ENCODE measurements at regions of chr10 and their contacts with region 1.

Region 1: DNA sequence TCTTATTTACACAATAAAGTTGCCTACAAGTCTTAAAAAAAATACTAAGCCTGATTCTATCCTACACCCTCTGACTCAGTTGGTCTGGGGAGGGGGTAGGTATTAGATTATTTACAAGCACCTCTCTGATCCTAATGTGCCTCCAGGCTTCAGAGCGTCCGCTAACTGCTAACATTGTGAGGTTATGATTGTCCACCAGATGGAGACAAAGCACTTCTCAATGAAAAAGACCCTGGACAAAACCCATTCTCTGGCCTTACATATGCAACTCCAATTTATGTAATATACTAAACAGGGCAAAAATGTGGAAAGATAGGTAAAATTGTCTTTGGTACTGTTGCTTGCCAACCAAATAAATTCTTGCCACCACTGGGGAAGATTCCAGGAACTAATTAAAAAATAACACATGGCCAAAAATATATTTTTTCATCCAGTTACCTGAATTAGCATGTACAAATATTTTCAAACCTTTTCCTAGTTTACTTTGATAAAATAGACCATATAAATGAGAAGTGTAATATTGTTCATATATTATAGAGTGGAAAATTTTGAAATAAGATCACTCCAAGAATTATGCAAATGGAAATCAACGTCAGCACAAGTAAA is 92.4 kb downstream of the KIF20B start:
- DNase-seq: peak in 24 of 42 donors; percentile 4 to 78 (median 37)

Region 2: DNA sequence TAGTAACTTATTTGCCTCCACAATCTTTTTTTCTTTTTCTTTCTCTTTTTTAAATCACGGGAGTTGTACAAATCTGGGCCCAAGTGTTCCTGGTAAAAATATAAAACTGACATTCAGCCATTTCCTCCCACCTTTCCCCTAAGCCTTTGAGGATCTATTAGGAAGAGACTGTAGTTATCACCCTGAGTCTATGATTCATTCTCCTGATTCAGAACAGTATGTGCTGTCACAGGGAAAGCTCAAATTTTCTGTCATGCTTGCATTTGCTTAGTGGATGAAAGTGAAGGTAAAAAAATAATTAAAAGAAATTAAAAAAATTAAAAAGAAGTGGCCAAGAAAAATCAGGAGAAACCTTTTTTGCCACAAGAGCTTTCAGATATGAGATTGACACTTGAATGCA is 20.7 kb before region 1 on chr10:
- intact Hi-C with region 1: no loop called
- DNase-seq: peak in 9 of 42 donors; percentile 4 to 48 (median 30)

Region 3: GRCh38 chr10:90865401-90865800 is 1071.6 kb after region 1 on chr10:
- intact Hi-C with region 1: loop called (anchors 5 kb)
- DNase-seq: no peak

Measured in head of caudate nucleus (tissue), 42 donors.